ENCODE measurements at regions of chr3 and their contacts with region 1.

Region 1: DNA sequence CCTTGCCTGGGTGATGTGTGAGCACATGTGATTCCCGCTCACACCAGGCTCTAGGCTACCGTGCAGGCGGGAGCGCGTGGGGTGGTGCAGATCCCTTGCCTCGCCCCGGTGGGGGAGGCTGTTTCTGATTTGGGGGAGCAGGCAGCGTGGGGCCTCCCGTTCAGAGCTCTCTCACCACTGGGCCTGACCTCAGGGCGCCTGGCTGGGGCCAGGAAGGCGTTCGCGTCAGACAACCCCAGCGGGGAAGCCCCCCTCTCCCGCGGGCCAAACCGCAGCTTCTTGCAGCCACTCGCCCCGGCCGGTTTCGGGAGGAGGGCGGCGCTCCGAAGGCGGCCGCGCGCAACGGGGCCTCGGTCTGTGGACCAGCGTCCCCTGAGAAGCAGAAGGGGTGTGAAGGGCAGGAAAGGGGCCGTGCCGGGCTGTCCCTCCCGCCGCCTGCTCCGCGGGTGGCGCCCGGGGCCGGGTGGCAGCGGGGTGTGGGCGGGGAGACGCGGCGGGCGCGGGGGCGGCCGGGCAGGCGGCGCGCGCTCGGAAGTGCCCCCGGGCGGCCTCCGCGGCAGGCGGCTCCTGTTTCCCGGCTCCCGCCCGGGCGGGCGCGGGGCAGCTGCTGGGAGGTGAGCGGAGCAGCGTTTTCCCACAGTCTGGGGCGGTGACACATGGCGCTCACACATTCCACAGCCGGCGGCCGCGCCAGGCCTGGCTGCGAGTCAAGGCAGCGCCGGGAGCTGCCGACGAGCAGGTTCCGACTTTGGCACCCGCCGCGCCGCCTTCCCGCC is 65.1 kb upstream of the HES1 start:
- DNase-seq: peak; percentile 92
- ATAC-seq: peak; percentile 89

Region 2: DNA sequence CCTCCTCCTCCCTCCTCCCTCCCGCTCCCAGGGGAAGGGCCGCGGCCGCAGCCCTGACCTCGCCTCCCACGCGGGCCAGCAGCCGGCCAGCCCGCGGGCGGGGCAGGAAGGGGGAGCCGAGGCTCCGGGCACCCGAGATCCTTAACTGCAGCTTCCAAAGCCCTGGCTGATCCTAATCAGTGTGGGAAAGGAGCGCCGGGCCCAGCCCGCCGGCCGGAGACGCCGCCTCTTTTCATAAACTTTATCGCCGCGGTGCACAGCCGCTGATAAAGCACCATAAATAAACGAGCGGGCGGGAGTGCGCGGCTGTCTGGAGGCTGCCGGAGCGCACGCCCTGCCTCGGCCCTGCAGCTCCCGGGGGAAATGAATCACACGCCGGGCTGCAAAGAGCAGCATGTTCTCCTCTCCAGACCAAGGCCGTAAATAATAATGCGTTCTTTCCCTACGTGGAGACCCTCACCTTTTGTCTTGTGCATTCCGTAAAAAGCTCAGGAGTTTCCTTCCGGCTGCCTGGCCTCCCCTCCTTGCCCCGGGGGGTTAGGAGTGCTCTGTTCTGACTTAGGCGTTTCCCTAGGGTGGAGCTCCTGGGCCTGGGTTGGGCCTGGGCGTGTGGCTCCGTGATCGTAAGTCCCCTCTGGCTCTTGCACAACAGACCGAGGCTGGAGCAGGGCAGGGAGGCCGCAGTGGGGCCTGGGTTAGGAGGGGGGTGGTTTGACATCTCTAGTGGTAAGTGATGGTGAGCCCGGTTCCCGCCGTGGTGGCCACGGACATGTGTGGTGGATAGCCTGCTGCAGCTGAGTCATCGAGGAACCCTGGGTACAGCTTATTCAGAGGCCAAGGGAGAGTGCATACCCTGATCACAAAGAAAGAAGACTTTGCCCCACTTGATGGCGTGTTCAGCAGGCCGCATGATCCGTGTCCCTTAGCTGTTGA is 67.4 kb before region 1 on chr3:
- intact Hi-C with region 1: loop called (anchors 5 kb)
- DNase-seq: peak; percentile 94
- ATAC-seq: peak; percentile 91

Measured in Right ventricle myocardium inferior (tissue), 1 donor.